Head of caudate nucleus (tissue), 42 donors: ENCODE measurements at regions of chr2 and their contacts with region 1.

Region 1: DNA sequence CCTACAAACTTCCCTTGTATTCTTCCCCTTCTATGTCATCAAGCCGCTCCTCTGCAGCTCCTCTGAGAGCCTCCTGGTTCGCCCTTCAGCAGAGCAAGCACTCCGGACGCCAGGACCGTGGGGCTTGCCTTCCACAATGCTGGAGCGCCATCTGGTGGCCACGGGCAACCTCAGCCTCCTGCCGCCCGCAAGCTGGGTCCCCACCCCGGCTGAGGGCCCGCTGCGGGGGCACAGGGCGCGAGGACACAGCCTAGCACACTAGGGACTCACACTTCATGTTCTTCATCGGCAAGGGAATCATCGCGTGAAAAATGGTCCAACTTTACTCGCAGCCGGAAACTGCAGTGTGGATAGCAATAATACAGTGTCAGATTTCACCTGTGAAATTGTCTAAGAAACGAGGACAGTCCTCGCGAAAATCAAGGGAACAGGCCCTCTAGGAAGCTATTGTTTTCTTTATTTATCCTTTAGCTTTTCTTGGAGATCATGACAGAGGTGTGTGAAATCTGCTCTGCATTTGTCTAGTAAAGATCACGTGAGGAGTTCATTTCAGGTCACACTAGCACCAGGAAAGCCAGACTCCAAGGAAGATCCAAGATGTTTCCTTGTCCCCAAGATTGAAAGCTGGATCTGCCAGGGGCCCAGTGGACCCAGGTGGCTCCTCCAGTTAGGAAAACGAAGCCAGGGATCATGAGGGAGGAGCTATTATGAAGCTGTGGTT is 5.8 kb downstream of the PRLH start:
- DNase-seq: peak; percentile 74 to 96 (median 90)

Region 2: GRCh38 chr2:237011206-237011795 is 560.9 kb before region 1 on chr2:
- intact Hi-C with region 1: no loop called
- DNase-seq: no peak

Region 3: DNA sequence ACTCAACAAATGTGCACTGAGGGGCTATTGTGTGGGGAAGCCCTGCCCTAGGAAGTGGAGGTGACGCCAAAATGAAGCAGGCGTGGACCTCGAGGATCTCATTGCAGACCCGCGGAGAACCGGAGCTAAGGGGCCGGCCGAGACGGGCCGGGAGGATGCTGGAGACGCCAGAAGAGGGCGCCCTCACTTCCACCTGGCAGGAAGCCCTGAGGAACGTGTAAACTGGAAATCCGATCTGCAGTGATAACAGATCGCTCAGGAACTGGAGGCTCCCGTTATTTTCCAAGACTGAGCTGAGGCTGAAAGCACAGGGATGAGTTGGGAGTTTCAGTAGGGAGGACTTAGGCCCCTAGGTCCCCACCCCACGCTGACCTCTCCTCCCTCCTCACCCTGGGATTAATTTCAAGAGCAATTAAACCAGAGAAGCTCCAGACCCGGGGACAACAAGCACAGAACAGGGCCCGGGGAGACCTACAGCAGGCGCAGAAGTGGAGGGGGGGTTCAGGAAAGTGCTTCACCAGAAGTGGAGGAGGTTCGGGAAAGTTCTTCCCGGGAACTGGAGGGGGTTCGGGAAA is 150.6 kb before region 1 on chr2:
- intact Hi-C with region 1: no loop called
- DNase-seq: peak; percentile 18 to 87 (median 69)

Region 4: DNA sequence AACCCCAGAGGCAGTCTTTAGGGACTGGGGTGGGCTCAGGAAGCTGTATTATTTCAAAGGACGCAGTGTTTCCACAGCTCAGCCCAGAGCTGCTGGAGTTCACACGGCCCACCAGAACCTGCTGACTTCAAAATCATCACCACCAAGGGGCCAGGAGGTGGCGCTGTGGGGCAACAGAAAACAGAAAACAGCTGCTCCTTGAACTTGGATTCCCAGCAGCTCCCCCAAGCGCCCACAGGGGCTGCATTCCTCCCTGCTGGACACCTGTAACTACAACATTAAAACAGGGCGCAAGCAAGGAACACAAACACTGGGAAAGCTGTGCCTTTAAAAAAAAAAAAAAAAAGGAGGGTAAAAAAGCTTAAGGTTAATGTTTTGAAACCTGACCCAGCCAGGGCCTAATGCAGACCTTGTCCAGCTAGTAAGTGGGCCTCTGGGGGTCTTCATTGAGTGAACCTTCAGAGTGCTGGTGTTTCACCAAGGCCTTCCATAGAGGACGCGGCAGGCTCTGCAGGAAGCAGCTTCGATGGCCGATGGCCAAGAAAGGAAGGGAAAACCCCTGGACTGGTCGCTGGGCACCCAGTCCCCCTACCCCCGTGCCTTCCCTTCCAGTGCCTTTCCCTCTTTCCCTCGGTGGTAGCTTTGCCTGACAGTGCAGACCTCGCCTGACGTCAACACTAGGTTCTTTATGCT is 59.3 kb before region 1 on chr2:
- intact Hi-C with region 1: loop called (anchors 2 kb)
- DNase-seq: peak; percentile 68 to 93 (median 86)

Region 5: DNA sequence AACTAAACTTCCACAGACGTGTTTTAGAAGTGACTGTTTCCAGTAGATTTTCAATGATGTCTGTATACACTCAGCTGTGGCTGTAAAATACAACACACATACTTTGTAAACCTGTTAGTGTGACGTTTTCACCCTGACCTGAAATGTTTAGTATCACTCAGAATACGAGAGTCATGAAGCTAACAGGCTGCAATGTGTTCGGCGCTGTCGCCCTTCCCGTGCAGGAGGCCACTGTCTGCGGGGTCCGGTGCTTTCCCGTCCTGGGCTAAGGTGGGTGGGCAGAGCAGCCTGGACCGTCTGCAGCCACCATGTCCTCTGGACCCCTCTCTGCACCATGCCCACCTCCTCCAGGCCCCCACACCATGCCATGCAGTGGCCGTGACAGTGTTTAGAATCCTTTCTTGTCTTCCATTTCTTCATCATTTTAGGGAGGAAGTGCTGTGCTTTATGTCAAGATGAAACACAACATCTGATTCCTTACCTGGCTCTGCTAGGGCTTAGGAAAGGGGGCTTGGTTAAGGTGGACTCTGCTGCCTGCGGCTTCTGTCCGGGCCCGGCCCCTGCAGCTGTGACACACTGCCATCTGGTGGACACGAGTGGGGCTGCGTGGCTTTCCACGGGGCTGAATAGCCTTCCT is 172.6 kb after region 1 on chr2:
- intact Hi-C with region 1: loop called (anchors 5 kb)
- DNase-seq: peak; percentile 48 to 94 (median 86)